T-cell (primary cell): ENCODE measurements at regions of chr11 and their contacts with region 1.

Region 1: GRCh38 chr11:119084663-119085436 is at the start of gene HMBS:
- DNase-seq: peak; percentile 79 to 96 (median 89)
- ATAC-seq: peak; percentile 93 to 95 (median 94)
- H3K4me3 ChIP-seq: peak within 1 kb of the TSS; percentile 70 to 96
- H3K4me3 Mint-ChIP-seq: peak within 1 kb of the TSS; percentile 89 to 93 (median 91)
- H3K27ac ChIP-seq: peak within 1 kb of the TSS; percentile 57
- H3K27ac Mint-ChIP-seq: peak within 1 kb of the TSS; percentile 92 to 97
- H3K4me1 ChIP-seq: peaks cover 3 to 30% of the 10 kb centered on the region in 2 experiments
- H3K4me1 Mint-ChIP-seq: peaks cover 15 to 22% (median 18%) of the 10 kb centered on the region in 3 donors
- H3K27me3 ChIP-seq: no peaks in the 10 kb centered on the region
- H3K27me3 Mint-ChIP-seq: no peaks in the 10 kb centered on the region
- total RNA-seq, gene HMBS: 6.7 to 17.8 (median 12.3) TPM

Region 2: DNA sequence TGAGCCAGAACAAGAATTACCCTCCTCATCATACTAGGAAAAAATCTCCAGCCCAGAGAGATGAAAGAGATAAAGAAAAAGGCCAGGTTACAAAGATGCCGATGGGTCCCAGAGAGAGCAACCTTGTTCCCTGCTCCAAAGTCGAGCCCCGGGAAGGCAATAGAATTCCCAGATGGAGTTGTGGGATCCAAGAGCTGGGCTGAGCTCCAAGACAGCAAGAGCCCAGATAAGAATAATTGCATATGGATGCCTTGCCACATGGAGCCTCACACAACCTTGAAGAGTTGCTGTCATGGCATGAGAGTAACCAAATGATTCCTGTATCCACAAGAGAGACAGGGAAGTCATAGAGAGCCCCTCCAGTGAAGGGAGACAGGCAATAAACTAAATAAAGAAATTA is 1067.7 kb before region 1 on chr11:
- CTCF ChIA-PET with region 1: no interaction called
- POLR2A ChIA-PET with region 1: interaction called in 1 of 2 experiments, 12 read pairs
- DNase-seq: no peak
- ATAC-seq: no peak
- H3K4me3 ChIP-seq: no peak overlapping the region
- H3K4me3 Mint-ChIP-seq: peak overlapping the region in 1 of 3 donors; percentile 76
- H3K27ac ChIP-seq: no peak overlapping the region
- H3K27ac Mint-ChIP-seq: peak overlapping the region; percentile 46 to 100
- H3K4me1 ChIP-seq: peaks cover 14 to 50% of the 10 kb centered on the region in 2 experiments
- H3K4me1 Mint-ChIP-seq: peaks cover 48 to 57% (median 50%) of the 10 kb centered on the region in 3 donors
- H3K27me3 ChIP-seq: no peaks in the 10 kb centered on the region
- H3K27me3 Mint-ChIP-seq: no peaks in the 10 kb centered on the region

Region 3: DNA sequence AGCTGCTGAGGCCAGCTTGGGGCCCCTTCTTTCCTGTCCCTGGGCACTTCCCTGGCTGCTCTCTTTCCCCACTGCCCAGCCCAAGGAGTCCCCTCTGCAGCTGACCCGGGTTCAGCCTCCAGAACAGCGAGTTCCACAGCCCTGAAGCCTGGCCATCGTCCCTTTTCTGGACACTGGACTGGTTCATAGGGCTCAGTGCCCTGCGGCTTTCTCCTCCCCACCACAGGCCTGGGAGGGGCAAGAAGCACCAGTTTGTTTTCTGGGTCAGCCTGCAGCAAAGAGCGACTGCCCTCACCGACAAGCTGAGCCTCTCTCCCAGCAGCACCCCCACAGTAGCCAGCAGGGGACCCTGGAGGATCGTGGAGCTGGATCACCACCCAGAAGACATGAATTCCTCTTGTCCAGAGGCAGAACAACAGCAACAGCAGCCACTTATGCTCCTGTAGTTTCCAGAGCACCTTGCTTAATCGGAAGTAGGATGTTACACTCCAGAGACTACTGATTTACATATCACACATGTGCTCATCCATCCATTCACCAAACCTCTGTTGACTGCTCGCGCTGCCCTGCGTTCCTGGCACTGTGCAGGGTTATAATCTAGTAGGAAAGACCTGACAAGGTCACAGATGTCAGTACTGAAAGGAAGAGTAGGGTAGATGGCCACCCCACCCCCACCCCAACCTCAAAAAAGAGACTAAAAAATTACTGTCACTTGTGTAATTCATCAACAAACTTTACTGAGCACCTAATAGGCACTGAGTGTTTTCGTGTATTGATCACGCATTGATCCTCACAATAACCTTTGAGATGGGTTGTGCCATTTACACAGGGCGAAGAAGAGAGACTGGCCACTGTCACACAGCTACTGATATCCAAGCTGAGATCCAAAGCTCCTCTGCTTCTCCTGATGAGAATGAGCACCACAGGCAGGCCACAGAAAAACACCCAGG is 214.2 kb before region 1 on chr11:
- CTCF ChIA-PET with region 1: no interaction called
- POLR2A ChIA-PET with region 1: no interaction called
- DNase-seq: peak in 11 of 35 experiments; percentile 14 to 62 (median 26)
- ATAC-seq: peak; percentile 36 to 60 (median 53)
- H3K4me3 ChIP-seq: peak overlapping the region; percentile 35 to 51
- H3K4me3 Mint-ChIP-seq: peak overlapping the region; percentile 69 to 86 (median 71)
- H3K27ac ChIP-seq: peak overlapping the region; percentile 100
- H3K27ac Mint-ChIP-seq: peak overlapping the region; percentile 95 to 98
- H3K4me1 ChIP-seq: peaks cover 29 to 67% of the 10 kb centered on the region in 2 experiments
- H3K4me1 Mint-ChIP-seq: peaks cover 58 to 64% (median 59%) of the 10 kb centered on the region in 3 donors
- H3K27me3 ChIP-seq: no peaks in the 10 kb centered on the region
- H3K27me3 Mint-ChIP-seq: no peaks in the 10 kb centered on the region

Region 4: DNA sequence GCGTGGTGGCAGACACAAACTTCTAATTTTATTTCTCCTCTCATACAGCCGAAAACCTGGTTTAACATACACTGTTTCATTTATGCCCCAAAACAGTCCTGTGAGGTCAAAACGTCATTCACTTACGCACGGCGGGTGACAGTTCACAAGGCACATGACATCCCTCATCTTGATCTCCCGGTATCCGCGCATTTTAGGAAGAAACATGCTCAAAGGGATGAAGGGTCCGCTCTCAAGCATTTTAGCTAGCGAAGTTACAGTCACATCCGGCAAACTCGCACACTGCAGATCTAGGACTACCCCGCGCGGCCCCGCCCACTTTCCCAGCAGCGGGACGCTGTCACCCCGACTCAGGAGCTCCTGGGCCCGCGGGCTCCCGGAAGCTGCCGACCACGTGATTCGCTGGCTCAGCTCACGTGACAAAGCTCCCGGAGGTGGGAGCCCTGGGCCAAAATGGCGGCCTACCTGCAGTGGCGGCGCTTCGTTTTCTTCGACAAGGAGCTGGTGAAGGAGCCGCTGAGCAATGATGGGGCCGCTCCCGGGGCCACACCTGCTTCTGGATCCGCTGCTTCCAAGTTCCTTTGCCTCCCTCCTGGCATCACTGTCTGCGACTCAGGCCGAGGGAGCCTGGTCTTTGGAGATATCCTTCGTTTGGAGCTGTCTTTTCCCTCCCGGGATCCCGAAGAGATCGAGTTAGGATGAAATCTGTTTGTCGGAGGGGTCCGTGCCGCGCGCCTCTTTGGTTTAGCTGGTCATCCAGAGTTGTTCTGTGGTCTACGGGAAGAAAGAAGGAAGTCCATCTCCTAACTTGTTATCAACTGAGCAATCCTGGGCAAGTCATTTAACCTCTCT is 17.3 kb before region 1 on chr11 and contains the start of gene VPS11:
- CTCF ChIA-PET with region 1: interaction called, 3 to 16 read pairs
- POLR2A ChIA-PET with region 1: interaction called, 8 to 12 read pairs
- DNase-seq: peak; percentile 89 to 100 (median 98)
- ATAC-seq: peak; percentile 92 to 99 (median 98)
- H3K4me3 ChIP-seq: peak within 1 kb of the TSS; percentile 61 to 94
- H3K4me3 Mint-ChIP-seq: peak within 1 kb of the TSS; percentile 94 to 97 (median 96)
- H3K27ac ChIP-seq: peak within 1 kb of the TSS; percentile 94
- H3K27ac Mint-ChIP-seq: peak within 1 kb of the TSS; percentile 96 to 99
- H3K4me1 ChIP-seq: peaks cover 16 to 33% of the 10 kb centered on the region in 2 experiments
- H3K4me1 Mint-ChIP-seq: peaks cover 44 to 55% (median 48%) of the 10 kb centered on the region in 3 donors
- H3K27me3 ChIP-seq: no peaks in the 10 kb centered on the region
- H3K27me3 Mint-ChIP-seq: no peaks in the 10 kb centered on the region
- total RNA-seq, gene VPS11: 59.5 to 69.8 (median 62.6) TPM

Region 5: GRCh38 chr11:119101759-119102423 is 17.0 kb after region 1 on chr11 and contains the start of gene DPAGT1:
- CTCF ChIA-PET with region 1: interaction called in 1 of 2 experiments, 13 read pairs
- POLR2A ChIA-PET with region 1: interaction called in 1 of 2 experiments, 15 read pairs
- DNase-seq: peak; percentile 70 to 89 (median 80)
- ATAC-seq: peak; percentile 85 to 90 (median 86)
- H3K4me3 ChIP-seq: peak within 1 kb of the TSS; percentile 83 to 98
- H3K4me3 Mint-ChIP-seq: peak within 1 kb of the TSS; percentile 86 to 98 (median 97)
- H3K27ac ChIP-seq: peak within 1 kb of the TSS; percentile 87
- H3K27ac Mint-ChIP-seq: peak within 1 kb of the TSS; percentile 99 to 100
- H3K4me1 ChIP-seq: peaks cover 16 to 35% of the 10 kb centered on the region in 2 experiments
- H3K4me1 Mint-ChIP-seq: peaks cover 39 to 57% (median 53%) of the 10 kb centered on the region in 3 donors
- H3K27me3 ChIP-seq: no peaks in the 10 kb centered on the region
- H3K27me3 Mint-ChIP-seq: no peaks in the 10 kb centered on the region
- total RNA-seq, gene DPAGT1: 21.7 to 54.2 (median 43.9) TPM

Region 6: DNA sequence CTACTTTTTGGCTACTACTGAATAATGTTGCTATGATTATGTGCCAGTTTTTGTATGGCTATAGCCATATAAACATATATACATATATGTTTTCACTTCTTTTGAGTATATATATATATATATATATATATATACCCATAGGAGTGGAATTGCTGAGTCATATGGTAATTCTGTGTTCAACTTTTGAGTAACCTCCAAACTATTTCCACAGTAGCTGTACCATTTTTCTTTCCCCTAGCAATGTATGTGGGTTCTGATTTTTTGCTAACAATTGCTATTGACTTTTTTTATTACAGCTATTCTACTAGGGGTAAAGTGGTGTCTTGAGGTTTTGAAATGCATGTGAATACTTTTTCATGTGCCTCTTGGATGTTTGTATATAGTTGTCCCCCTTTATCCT is 151.6 kb after region 1 on chr11:
- CTCF ChIA-PET with region 1: no interaction called
- POLR2A ChIA-PET with region 1: no interaction called
- DNase-seq: no peak
- ATAC-seq: no peak
- H3K4me3 ChIP-seq: no peak overlapping the region
- H3K4me3 Mint-ChIP-seq: no peak overlapping the region
- H3K27ac ChIP-seq: no peak overlapping the region
- H3K27ac Mint-ChIP-seq: peak overlapping the region; percentile 7 to 46
- H3K4me1 ChIP-seq: peaks cover 12 to 15% of the 10 kb centered on the region in 2 experiments
- H3K4me1 Mint-ChIP-seq: peaks cover 46 to 55% (median 53%) of the 10 kb centered on the region in 3 donors
- H3K27me3 ChIP-seq: no peaks in the 10 kb centered on the region
- H3K27me3 Mint-ChIP-seq: no peaks in the 10 kb centered on the region